CD4-positive, alpha-beta T cell (primary cell): ENCODE measurements at regions of chr6 and their contacts with region 1.

Region 1: DNA sequence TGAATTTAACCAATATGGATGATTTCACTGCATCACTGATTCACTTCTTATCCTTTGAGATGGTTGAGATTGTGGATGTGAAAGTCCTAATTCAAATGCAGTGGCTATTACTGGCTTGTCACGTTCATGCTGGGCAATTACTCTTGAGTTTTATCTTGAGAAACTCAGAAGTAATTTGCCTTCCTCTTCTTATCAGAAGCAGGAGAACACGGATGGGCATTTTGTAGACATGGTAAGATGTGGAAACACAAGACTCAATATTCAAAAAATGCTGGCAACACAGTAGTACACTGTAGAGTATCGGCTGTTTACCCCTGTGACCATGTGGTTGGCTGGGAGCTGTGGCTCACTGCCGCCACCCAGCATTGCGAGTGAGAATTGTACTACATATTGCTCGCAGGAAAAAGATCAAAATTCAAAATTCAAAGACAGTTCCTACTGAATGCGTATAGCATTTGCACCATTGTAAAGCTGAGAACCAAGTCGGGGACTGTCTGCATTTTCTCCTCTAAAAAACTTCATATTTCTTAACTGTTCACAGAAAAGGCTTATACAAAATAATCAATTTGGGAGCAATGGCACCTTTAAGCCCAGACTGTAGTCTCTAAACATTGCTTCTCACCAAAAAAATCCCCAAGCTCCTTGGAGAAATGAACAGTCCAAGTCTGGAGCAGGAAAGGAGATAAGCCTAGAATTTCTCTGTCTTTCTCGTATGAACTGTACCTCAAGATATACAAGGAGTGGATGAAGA is 61.9 kb upstream of the ELOVL5 start:
- DNase-seq: peak; percentile 40 to 83 (median 60)
- ATAC-seq: peak; percentile 100
- H3K4me3 ChIP-seq: no peak overlapping the region
- H3K4me3 Mint-ChIP-seq: no peak overlapping the region
- H3K27ac ChIP-seq: no peak overlapping the region
- H3K27ac Mint-ChIP-seq: no peak overlapping the region
- H3K4me1 ChIP-seq: peaks cover 3% of the 10 kb centered on the region
- H3K4me1 Mint-ChIP-seq: peaks cover 5% of the 10 kb centered on the region
- H3K27me3 ChIP-seq: no peaks in the 10 kb centered on the region
- H3K27me3 Mint-ChIP-seq: peaks cover 4% of the 10 kb centered on the region
- CTCF ChIP-seq: peak; percentile 85

Region 2: GRCh38 chr6:53294095-53294494 is 116.6 kb before region 1 on chr6:
- CTCF ChIA-PET with region 1: interaction called, 4 read pairs
- POLR2A ChIA-PET with region 1: interaction called, 4 read pairs
- intact Hi-C with region 1: loop called (anchors 1 to 5 kb)
- DNase-seq: peak in 3 of 14 experiments; percentile 22 to 46 (median 40)
- ATAC-seq: no peak
- H3K4me3 ChIP-seq: no peak overlapping the region
- H3K4me3 Mint-ChIP-seq: no peak overlapping the region
- H3K27ac ChIP-seq: peak overlapping the region in 1 of 2 donors; percentile 23
- H3K27ac Mint-ChIP-seq: peak overlapping the region; percentile 73
- H3K4me1 ChIP-seq: peaks cover 53% of the 10 kb centered on the region
- H3K4me1 Mint-ChIP-seq: peaks cover 89% of the 10 kb centered on the region
- H3K27me3 ChIP-seq: no peaks in the 10 kb centered on the region
- H3K27me3 Mint-ChIP-seq: no peaks in the 10 kb centered on the region
- CTCF ChIP-seq: peak; percentile 33